Left cardiac atrium (tissue), 4 donors: ENCODE measurements at regions of chr19 and their contacts with region 1.

Region 1: DNA sequence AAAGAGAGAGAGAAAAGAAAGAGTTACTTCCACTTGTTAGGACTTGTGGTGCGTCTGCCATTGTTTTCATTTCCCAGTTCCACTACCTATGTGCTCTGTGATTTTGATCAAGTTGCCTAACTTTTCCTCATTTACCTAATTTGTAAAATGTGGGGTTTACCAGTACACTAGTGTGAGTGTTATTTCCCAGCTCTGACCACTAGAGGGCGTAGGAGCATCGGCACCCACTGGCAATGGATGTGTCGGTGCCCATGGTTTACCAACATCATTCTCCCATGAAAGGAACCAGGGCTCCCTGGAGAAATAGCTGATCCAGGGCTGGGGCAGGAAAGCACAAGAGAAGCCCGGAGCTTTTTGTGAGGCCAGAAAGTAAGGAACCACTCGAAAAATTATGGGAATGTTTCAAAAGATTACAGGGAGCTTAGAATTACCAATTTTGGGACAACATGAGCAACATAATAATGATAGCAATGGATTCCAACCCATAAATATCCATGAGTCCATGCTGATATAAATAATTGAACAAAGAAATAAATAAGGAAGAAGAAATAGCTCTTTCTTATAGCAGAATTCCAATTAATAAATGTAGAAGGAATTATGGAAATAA is 15.1 kb upstream of the CEACAM4 start:
- DNase-seq: peak; percentile 59
- ATAC-seq: peak; percentile 55 to 73

Region 2: DNA sequence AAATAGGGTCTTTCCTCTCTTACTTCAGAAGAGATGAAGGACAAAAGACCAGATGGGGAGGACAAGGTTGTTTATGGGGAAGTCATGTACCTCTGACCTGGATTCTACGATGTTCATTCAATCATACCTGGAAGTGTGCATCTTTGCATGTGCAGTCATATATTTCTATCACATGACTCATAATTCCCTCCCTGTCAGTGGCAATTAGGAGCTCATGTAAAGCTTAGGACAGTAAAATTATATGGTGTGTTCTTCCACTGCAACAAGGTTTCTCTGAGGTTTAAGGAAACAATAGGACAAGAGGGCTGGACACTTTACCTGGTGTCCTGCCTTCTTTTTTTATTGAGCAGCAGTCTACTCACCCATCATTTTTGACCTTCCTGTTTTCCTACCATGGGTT is 26.3 kb after region 1 on chr19:
- intact Hi-C with region 1: no loop called
- DNase-seq: no peak
- ATAC-seq: no peak

Region 3: GRCh38 chr19:41706741-41707501 is 64.9 kb after region 1 on chr19:
- intact Hi-C with region 1: no loop called
- DNase-seq: peak; percentile 34
- ATAC-seq: peak; percentile 59 to 74

Region 4: DNA sequence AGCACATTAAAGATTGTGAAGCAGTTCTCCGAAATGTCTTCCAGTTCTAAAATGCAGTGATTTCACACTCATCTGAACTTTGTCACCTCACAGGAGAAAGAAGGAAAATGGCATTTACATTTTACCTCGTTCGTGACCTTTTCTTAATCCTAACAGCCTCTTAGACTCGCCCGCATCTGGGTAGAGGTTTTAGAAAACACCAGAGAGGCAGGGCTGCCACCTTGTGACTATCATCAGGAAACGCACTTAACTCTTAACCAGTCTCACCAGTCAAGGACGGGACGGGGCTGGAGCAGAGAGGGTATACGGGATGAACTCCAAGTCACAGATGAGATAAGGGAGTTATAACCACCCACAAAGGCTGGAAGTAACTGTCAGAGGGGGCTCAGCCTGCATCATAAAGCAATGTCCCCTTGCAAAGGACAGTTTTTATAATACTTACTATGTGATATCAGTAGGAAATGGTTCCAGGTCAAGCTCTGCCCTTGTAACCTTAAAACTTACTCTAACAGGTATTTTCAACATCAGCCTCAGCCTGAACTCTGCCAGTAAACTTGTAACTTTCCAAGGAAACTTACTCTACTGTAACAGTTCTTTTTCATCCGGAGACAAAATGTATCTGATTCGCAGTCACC is 104.7 kb after region 1 on chr19:
- intact Hi-C with region 1: loop called in 1 of 2 experiments (anchors 5 kb)
- DNase-seq: no peak
- ATAC-seq: peak in 1 of 2 donors; percentile 77